ENCODE measurements at regions of chr10 and their contacts with region 1.

Region 1: GRCh38 chr10:14571866-14572507 is 202.7 kb downstream of the FAM107B start:
- DNase-seq: peak; percentile 46 to 90 (median 64)
- ATAC-seq: peak; percentile 66
- H3K4me3 ChIP-seq: peak overlapping the region; percentile 65
- H3K4me3 Mint-ChIP-seq: peak overlapping the region; percentile 92
- H3K27ac ChIP-seq: peak overlapping the region; percentile 85 to 93
- H3K27ac Mint-ChIP-seq: peak overlapping the region; percentile 98
- H3K4me1 ChIP-seq: peaks cover 71% of the 10 kb centered on the region
- H3K4me1 Mint-ChIP-seq: peaks cover 96% of the 10 kb centered on the region
- H3K27me3 ChIP-seq: no peaks in the 10 kb centered on the region
- H3K27me3 Mint-ChIP-seq: no peaks in the 10 kb centered on the region
- CTCF ChIP-seq: no peak

Region 2: GRCh38 chr10:13949844-13950595 is 622.0 kb before region 1 on chr10:
- CTCF ChIA-PET with region 1: no interaction called
- POLR2A ChIA-PET with region 1: no interaction called
- intact Hi-C with region 1: no loop called
- DNase-seq: no peak
- ATAC-seq: no peak
- H3K4me3 ChIP-seq: no peak overlapping the region
- H3K4me3 Mint-ChIP-seq: no peak overlapping the region
- H3K27ac ChIP-seq: no peak overlapping the region
- H3K27ac Mint-ChIP-seq: no peak overlapping the region
- H3K4me1 ChIP-seq: no peaks in the 10 kb centered on the region
- H3K4me1 Mint-ChIP-seq: peaks cover 3% of the 10 kb centered on the region
- H3K27me3 ChIP-seq: no peaks in the 10 kb centered on the region
- H3K27me3 Mint-ChIP-seq: no peaks in the 10 kb centered on the region
- CTCF ChIP-seq: no peak

Region 3: GRCh38 chr10:14556285-14556956 is 15.6 kb before region 1 on chr10:
- CTCF ChIA-PET with region 1: interaction called, 10 read pairs
- POLR2A ChIA-PET with region 1: interaction called, 43 read pairs
- intact Hi-C with region 1: loop called in 1 of 2 experiments (anchors 2 kb)
- DNase-seq: peak in 3 of 14 experiments; percentile 68 to 77 (median 71)
- ATAC-seq: peak; percentile 32
- H3K4me3 ChIP-seq: no peak overlapping the region
- H3K4me3 Mint-ChIP-seq: peak overlapping the region; percentile 45
- H3K27ac ChIP-seq: peak overlapping the region; percentile 38 to 53
- H3K27ac Mint-ChIP-seq: peak overlapping the region; percentile 98
- H3K4me1 ChIP-seq: peaks cover 86% of the 10 kb centered on the region
- H3K4me1 Mint-ChIP-seq: peaks cover 98% of the 10 kb centered on the region
- H3K27me3 ChIP-seq: no peaks in the 10 kb centered on the region
- H3K27me3 Mint-ChIP-seq: no peaks in the 10 kb centered on the region
- CTCF ChIP-seq: no peak

Region 4: DNA sequence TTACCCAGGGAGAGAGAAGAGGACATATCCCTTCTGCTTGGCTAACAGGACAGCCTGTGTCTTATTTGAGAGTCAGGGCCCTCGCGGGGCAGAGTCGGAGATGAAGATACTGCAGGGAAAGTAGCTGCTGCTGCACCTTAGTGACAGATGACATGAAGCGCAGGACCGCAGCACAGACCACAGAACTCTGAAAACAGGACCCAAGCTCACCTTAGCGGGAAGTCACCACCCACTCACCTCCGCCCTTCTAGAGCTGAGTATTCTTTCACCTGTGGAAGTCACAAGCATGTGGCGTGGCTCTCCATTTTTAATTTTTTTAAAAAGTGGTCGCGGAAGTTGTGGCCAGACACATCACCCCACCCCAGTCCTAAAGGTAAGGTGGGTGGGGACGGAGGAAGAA is 11.3 kb after region 1 on chr10:
- CTCF ChIA-PET with region 1: interaction called, 4 read pairs
- POLR2A ChIA-PET with region 1: interaction called, 101 read pairs
- intact Hi-C with region 1: loop called in 1 of 2 experiments (anchors 1 kb)
- DNase-seq: peak; percentile 70 to 95 (median 78)
- ATAC-seq: peak; percentile 77
- H3K4me3 ChIP-seq: no peak overlapping the region
- H3K4me3 Mint-ChIP-seq: peak overlapping the region; percentile 78
- H3K27ac ChIP-seq: peak overlapping the region; percentile 90 to 95
- H3K27ac Mint-ChIP-seq: peak overlapping the region; percentile 97
- H3K4me1 ChIP-seq: peaks cover 93% of the 10 kb centered on the region
- H3K4me1 Mint-ChIP-seq: peaks cover 98% of the 10 kb centered on the region
- H3K27me3 ChIP-seq: no peaks in the 10 kb centered on the region
- H3K27me3 Mint-ChIP-seq: no peaks in the 10 kb centered on the region
- CTCF ChIP-seq: no peak

Region 5: DNA sequence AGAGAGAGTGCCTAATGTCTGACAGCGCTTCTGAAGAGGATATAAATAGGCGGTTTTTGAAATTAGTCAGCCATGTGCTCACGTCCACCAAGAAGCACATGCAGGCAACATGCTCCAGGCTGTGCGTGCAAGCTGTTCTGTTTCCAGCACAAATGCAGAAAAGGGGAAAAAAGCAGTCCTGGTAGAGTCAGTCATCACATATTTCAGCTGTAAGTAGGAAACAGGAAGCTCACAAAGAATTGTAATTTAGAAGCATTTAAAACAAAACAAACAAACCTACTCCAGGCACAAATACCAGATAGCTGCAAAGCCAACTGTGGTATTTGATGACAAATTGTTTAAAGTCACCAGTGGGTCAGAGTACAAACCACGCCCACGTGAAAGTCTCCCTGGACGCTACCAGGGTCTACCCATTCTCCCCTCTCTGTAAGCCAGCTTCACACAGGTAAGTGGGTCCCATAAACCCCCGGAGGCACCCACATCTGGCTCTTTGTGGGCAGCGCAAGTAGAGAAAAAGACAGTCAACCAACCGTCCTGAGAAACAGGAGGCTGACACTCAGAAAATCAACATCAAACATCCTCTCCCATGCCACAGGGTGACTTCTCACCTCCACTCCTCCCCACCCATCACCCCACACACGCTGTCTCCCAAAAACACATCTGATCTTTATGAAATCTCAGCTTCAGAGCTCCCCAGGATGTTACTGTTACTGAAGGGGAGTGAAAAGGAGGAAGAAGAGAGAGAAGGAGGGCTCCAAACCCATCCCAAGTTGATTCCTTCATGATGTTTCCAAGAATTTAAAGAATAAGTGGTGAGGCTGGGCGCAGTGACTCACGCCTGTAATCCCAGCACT is 16.3 kb after region 1 on chr10:
- CTCF ChIA-PET with region 1: interaction called, 4 read pairs
- POLR2A ChIA-PET with region 1: interaction called, 101 read pairs
- intact Hi-C with region 1: loop called in 1 of 2 experiments (anchors 1 kb)
- DNase-seq: peak in 5 of 14 experiments; percentile 44 to 84 (median 67)
- ATAC-seq: peak; percentile 33
- H3K4me3 ChIP-seq: peak overlapping the region; percentile 17
- H3K4me3 Mint-ChIP-seq: peak overlapping the region; percentile 87
- H3K27ac ChIP-seq: peak overlapping the region; percentile 90 to 95
- H3K27ac Mint-ChIP-seq: peak overlapping the region; percentile 97
- H3K4me1 ChIP-seq: peaks cover 82% of the 10 kb centered on the region
- H3K4me1 Mint-ChIP-seq: peaks cover 95% of the 10 kb centered on the region
- H3K27me3 ChIP-seq: no peaks in the 10 kb centered on the region
- H3K27me3 Mint-ChIP-seq: no peaks in the 10 kb centered on the region
- CTCF ChIP-seq: no peak

Region 6: DNA sequence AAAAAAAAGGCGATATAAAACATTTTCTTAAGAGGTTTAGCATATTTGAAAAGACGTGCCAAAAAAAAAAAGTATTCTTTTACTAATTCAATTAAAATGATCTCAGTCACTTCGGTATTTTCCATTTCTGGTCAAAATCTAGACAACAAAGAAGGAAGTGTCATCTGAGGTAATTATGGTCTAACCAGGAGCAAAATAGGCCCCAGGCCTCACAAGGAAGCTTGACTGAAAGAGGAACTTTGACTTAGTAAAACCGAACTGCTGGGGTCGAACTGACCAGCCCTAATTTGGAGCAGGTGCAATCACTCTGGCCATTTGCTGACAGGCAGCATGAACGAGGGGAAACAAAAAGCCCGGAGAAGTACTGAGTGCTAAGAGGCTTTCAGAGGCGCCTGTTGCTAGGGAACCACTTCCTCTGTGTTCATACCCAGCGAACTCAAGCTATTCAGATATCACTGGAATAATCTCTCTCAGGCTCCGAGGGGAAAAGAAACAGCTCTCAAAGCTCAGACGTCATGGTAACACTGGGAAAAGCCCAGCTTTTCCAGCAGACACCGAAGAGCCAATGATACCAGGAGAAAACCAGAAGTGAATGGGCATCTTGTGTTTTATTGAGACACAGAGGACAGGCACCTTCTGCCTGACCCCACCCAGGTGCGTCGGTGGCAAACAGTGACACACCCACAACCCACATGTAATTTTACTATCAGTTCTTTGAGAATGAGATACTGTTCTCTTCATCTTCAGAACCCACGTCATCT is 76.2 kb after region 1 on chr10:
- CTCF ChIA-PET with region 1: interaction called, 4 read pairs
- POLR2A ChIA-PET with region 1: interaction called, 11 read pairs
- intact Hi-C with region 1: loop called (anchors 1 to 5 kb)
- DNase-seq: peak; percentile 44 to 92 (median 65)
- ATAC-seq: peak; percentile 85
- H3K4me3 ChIP-seq: peak overlapping the region; percentile 55
- H3K4me3 Mint-ChIP-seq: peak overlapping the region; percentile 84
- H3K27ac ChIP-seq: peak overlapping the region; percentile 91 to 95
- H3K27ac Mint-ChIP-seq: peak overlapping the region; percentile 99
- H3K4me1 ChIP-seq: peaks cover 43% of the 10 kb centered on the region
- H3K4me1 Mint-ChIP-seq: peaks cover 69% of the 10 kb centered on the region
- H3K27me3 ChIP-seq: no peaks in the 10 kb centered on the region
- H3K27me3 Mint-ChIP-seq: no peaks in the 10 kb centered on the region
- CTCF ChIP-seq: no peak

Region 7: DNA sequence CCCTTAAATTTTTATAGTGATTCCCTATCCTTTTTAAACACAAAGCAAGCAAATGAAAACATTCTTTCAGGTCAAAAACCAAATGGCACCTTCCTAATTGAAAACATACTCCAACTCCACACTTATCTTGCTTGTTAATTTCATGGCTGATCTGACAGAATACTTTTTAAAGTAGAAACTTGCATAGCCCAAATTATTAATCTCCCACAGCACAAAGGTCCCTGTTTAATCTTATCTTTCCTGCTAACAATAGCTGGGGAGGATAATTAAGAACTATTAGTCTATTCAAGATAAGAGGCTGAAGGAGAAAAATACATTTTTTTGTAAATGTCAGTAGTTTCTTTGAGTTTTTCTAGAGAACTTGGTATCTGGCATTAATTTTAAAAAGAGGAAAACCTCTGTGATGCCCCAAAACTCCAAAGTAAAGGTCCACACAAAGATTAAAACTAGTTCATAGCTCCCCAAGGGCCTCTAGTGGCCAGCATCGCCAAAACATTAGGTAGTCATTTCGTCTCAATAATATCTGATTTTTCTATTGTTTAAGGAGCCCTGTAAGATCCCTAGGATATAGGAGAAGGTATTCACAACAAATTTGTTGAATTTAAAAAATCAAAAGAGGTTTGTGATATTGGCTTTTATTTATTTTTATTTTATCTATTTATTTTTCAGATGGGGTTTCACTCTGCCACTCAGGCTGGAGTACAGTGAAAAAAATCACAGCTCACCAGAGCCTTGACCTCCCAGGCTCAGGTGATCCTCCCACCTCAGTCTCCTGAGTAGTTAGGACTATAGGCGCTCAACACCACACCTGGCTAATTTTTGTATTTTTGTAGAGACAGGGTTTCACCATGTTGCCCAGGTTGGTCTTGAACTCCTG is 251.1 kb after region 1 on chr10:
- CTCF ChIA-PET with region 1: no interaction called
- POLR2A ChIA-PET with region 1: no interaction called
- intact Hi-C with region 1: loop called in 1 of 2 experiments (anchors 5 kb)
- DNase-seq: peak in 13 of 14 experiments; percentile 15 to 67 (median 37)
- ATAC-seq: peak; percentile 56
- H3K4me3 ChIP-seq: no peak overlapping the region
- H3K4me3 Mint-ChIP-seq: no peak overlapping the region
- H3K27ac ChIP-seq: no peak overlapping the region
- H3K27ac Mint-ChIP-seq: no peak overlapping the region
- H3K4me1 ChIP-seq: no peaks in the 10 kb centered on the region
- H3K4me1 Mint-ChIP-seq: peaks cover 4% of the 10 kb centered on the region
- H3K27me3 ChIP-seq: no peaks in the 10 kb centered on the region
- H3K27me3 Mint-ChIP-seq: no peaks in the 10 kb centered on the region
- CTCF ChIP-seq: peak; percentile 76

Measured in CD4-positive, alpha-beta T cell (primary cell).